Activated CD8-positive, alpha-beta T cell treated with anti-CD3 and anti-CD28 coated beads for 36 hours (primary cell): ENCODE measurements at regions of chr14 and their contacts with region 1.

Region 1: DNA sequence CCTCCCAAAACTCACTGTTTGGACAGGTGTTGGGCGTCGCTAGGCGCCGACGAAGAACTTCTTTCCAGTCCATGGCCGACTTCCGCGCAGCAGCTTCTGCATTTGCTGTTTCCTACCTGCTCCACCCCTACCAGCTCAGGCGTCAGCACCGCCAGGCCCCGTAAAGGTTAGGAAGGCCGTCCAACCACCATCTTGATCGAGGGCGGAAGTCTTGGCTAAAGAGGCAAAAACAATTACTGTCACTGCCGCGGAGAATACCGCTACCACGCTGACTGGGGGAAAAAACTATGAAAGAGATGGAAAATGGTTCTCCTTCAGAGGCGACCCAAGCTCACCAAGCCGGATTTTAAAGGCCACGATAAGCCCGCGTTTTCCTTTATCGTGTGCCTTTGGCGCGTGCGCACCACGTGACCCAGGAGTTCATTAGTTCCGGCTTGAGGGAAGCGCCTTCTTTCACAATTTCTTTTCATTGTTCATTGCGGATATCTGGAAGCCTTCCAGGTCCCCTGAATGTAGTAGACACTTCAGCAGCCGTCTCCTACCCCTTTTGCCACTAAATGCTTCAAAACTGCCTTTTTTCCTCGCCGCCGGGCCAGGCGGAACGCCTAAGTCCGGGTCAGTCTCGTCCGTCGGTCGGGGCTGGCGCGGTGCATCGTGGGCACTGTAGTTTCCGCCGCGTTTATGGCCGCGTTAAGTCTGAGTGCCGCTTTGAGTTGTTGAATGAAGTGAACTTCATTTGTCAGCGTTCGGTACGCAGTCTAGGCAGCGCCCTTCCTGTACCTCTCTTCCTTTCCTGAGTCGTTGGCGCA is at the starts of genes PPP2R3C and PRORP:
- DNase-seq: peak; percentile 94
- ATAC-seq: peak; percentile 86
- H3K4me3 Mint-ChIP-seq: peak within 1 kb of the TSS; percentile 84
- H3K27ac Mint-ChIP-seq: peak within 1 kb of the TSS; percentile 99
- H3K4me1 Mint-ChIP-seq: peaks cover 58% of the 10 kb centered on the region
- H3K27me3 Mint-ChIP-seq: no peaks in the 10 kb centered on the region
- CTCF ChIP-seq: no peak
- total RNA-seq, gene PPP2R3C: 38.2 to 40.7 TPM
- total RNA-seq, gene PRORP: 30.6 to 34.4 TPM

Region 2: DNA sequence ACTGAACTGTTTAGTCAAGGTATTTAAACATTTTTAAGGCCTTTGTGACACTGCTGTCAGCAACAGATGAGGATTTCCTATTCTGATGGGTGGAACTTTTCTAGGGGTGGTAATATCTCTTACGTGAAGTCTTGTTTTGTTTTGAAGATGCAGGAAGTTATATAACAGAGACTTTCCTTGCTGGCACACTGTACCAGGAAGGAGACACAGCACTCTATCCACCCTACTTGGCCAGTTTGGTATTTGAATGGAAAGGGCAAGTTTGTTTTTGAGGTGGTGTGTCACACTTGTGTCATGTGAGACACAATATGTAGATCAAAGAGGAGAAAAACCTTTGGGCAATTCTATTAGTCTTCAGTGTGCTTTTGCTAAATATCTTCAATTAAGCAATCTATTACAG is 190.9 kb before region 1 on chr14:
- CTCF ChIA-PET with region 1: no interaction called
- POLR2A ChIA-PET with region 1: no interaction called
- intact Hi-C with region 1: no loop called
- DNase-seq: peak; percentile 48
- ATAC-seq: peak; percentile 79
- H3K4me3 Mint-ChIP-seq: peak overlapping the region; percentile 60
- H3K27ac Mint-ChIP-seq: peak overlapping the region; percentile 97
- H3K4me1 Mint-ChIP-seq: peaks cover 40% of the 10 kb centered on the region
- H3K27me3 Mint-ChIP-seq: no peaks in the 10 kb centered on the region
- CTCF ChIP-seq: no peak

Region 3: GRCh38 chr14:35292051-35292769 is 170.1 kb after region 1 on chr14 and contains the start of gene PSMA6:
- CTCF ChIA-PET with region 1: no interaction called
- POLR2A ChIA-PET with region 1: interaction called, 5 read pairs
- intact Hi-C with region 1: loop called (anchors 5 kb)
- DNase-seq: peak; percentile 99
- ATAC-seq: peak; percentile 92
- H3K4me3 Mint-ChIP-seq: peak within 1 kb of the TSS; percentile 97
- H3K27ac Mint-ChIP-seq: peak within 1 kb of the TSS; percentile 98
- H3K4me1 Mint-ChIP-seq: peaks cover 50% of the 10 kb centered on the region
- H3K27me3 Mint-ChIP-seq: no peaks in the 10 kb centered on the region
- CTCF ChIP-seq: no peak
- total RNA-seq, gene PSMA6: 361 to 393 TPM